Activated CD4-positive, alpha-beta T cell treated with anti-CD3 and anti-CD28 coated beads, Interleukin-2, amount 10 ng/mL, durations not matched to agents 24 days and 14 days (primary cell): ENCODE measurements at regions of chr3 and their contacts with region 1.

Region 1: GRCh38 chr3:46297658-46298463 is 55.6 kb downstream of the CCR3 start:
- DNase-seq: peak; percentile 62
- H3K4me3 Mint-ChIP-seq: peak overlapping the region; percentile 22
- H3K27ac Mint-ChIP-seq: peak overlapping the region; percentile 81
- H3K4me1 Mint-ChIP-seq: peaks cover 83% of the 10 kb centered on the region
- H3K27me3 Mint-ChIP-seq: peaks cover 4% of the 10 kb centered on the region

Region 2: DNA sequence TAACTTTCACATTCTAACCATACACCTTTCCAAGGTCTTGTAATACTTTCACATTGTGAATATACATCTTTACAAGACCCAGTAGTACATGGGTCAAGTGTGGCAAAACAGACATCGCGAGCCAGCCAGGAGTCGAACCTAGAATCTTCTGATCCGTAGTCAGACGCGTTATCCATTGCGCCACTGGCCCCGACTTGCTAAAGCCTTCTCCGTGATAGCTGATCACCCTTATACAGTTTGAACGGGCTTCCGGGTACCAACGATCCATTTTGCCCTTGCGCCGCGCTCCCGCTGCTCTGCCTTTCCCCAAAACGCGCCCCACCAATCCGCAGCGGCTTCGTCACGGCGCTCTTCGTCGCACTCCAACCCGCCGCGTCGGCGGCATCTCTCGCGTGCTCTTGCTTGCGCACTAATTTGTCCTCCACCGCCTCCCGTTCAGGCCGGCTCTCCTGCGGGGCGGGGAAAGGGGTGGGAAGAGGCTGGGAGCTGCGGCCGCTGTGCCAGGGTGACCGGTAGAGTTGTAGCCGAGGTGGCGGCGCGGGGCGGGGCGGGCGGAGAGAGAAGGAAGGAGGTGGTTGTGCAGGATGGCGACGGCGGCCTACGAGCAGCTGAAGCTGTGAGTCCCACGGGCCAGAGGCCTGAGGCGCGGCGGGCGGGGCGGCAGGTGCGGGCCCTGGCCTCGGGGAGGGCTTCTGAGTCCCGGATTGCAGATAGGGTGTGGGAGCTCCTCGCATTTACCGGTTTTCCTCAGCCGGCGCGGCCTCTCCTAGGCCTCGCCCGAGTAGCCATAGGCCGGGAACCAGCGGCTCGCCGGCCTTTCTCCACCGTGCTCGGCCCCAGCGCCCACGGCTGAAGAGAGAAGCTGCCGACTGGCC is 608.7 kb before region 1 on chr3 and contains the start of gene SACM1L:
- intact Hi-C with region 1: loop called (anchors 10 kb)
- DNase-seq: peak; percentile 99
- H3K4me3 Mint-ChIP-seq: peak within 1 kb of the TSS; percentile 87
- H3K27ac Mint-ChIP-seq: peak within 1 kb of the TSS; percentile 94
- H3K4me1 Mint-ChIP-seq: peaks cover 46% of the 10 kb centered on the region
- H3K27me3 Mint-ChIP-seq: peaks cover 4% of the 10 kb centered on the region
- total RNA-seq, gene SACM1L: 88.0 and 91.7 TPM in 2 replicates

Region 3: DNA sequence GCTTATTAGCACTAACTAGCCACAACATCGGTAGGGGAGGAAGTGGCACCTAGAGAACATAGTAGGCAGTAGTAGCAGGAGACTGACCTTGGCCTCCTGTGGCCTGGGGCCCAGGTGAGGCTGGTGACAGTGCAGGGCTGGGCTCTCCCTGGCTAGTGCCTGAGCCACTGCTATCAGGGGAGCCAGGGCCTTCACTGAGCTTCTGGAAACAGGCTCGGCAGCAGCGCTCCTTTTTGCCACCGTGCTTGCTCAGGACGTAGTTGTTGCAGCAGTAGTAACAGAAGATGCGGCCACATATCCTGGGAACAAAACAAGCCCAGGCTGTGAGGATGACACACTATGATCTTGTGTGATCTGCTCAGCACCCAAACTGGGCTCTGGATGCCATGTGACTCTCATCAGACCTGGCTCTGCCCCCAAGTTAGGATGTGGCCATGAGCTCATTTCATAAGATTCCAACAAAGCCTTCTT is 339.5 kb before region 1 on chr3:
- intact Hi-C with region 1: loop called (anchors 5 kb)
- DNase-seq: no peak
- H3K4me3 Mint-ChIP-seq: no peak overlapping the region
- H3K27ac Mint-ChIP-seq: no peak overlapping the region
- H3K4me1 Mint-ChIP-seq: peaks cover 43% of the 10 kb centered on the region
- H3K27me3 Mint-ChIP-seq: no peaks in the 10 kb centered on the region

Region 4: GRCh38 chr3:46098319-46098761 is 199.5 kb before region 1 on chr3:
- intact Hi-C with region 1: loop called (anchors 1 kb)
- DNase-seq: peak; percentile 91
- H3K4me3 Mint-ChIP-seq: peak overlapping the region; percentile 71
- H3K27ac Mint-ChIP-seq: peak overlapping the region; percentile 92
- H3K4me1 Mint-ChIP-seq: peaks cover 59% of the 10 kb centered on the region
- H3K27me3 Mint-ChIP-seq: peaks cover 11% of the 10 kb centered on the region

Region 5: GRCh38 chr3:46193436-46193835 is 104.4 kb before region 1 on chr3:
- intact Hi-C with region 1: no loop called
- DNase-seq: no peak
- H3K4me3 Mint-ChIP-seq: no peak overlapping the region
- H3K27ac Mint-ChIP-seq: no peak overlapping the region
- H3K4me1 Mint-ChIP-seq: no peaks in the 10 kb centered on the region
- H3K27me3 Mint-ChIP-seq: peaks cover 22% of the 10 kb centered on the region

Region 6: GRCh38 chr3:46242120-46242519 is 55.7 kb before region 1 on chr3 and contains the start of gene CCR3:
- intact Hi-C with region 1: no loop called
- DNase-seq: no peak
- H3K4me3 Mint-ChIP-seq: no peak within 1 kb of the TSS
- H3K27ac Mint-ChIP-seq: no peak within 1 kb of the TSS
- H3K4me1 Mint-ChIP-seq: peaks cover 8% of the 10 kb centered on the region
- H3K27me3 Mint-ChIP-seq: peaks cover 53% of the 10 kb centered on the region
- total RNA-seq, gene CCR3: not detected in 2 replicates

Region 7: DNA sequence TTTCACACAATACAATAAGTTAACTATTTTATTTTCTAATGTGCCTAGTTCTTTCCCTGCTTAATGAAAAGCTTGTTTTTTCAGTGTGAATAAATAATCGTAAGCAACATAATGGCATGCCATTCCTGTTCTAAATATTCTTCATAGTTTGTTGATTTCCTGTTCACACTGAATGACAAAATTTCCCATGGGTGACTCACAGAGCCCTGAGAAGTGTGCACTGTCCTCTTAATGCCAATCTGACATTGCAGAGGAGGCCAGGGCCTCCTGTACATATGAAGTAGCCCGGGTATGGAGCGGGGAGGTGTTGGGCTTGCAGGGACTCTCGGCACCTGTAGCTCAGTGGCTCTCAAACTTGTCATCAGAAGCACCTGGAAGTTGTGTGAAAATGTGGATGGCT is 31.3 kb before region 1 on chr3:
- intact Hi-C with region 1: loop called (anchors 1 kb)
- DNase-seq: no peak
- H3K4me3 Mint-ChIP-seq: no peak overlapping the region
- H3K27ac Mint-ChIP-seq: no peak overlapping the region
- H3K4me1 Mint-ChIP-seq: peaks cover 34% of the 10 kb centered on the region
- H3K27me3 Mint-ChIP-seq: peaks cover 36% of the 10 kb centered on the region

Region 8: GRCh38 chr3:46314517-46314916 is 16.7 kb after region 1 on chr3:
- intact Hi-C with region 1: loop called (anchors 2 kb)
- DNase-seq: peak; percentile 59
- H3K4me3 Mint-ChIP-seq: no peak overlapping the region
- H3K27ac Mint-ChIP-seq: no peak overlapping the region
- H3K4me1 Mint-ChIP-seq: peaks cover 3% of the 10 kb centered on the region
- H3K27me3 Mint-ChIP-seq: peaks cover 41% of the 10 kb centered on the region

Region 9: GRCh38 chr3:46372492-46373359 is 74.9 kb after region 1 on chr3:
- intact Hi-C with region 1: loop called (anchors 1 kb)
- DNase-seq: peak; percentile 82
- H3K4me3 Mint-ChIP-seq: peak overlapping the region; percentile 36
- H3K27ac Mint-ChIP-seq: peak overlapping the region; percentile 57
- H3K4me1 Mint-ChIP-seq: peaks cover 67% of the 10 kb centered on the region
- H3K27me3 Mint-ChIP-seq: peaks cover 32% of the 10 kb centered on the region

Region 10: DNA sequence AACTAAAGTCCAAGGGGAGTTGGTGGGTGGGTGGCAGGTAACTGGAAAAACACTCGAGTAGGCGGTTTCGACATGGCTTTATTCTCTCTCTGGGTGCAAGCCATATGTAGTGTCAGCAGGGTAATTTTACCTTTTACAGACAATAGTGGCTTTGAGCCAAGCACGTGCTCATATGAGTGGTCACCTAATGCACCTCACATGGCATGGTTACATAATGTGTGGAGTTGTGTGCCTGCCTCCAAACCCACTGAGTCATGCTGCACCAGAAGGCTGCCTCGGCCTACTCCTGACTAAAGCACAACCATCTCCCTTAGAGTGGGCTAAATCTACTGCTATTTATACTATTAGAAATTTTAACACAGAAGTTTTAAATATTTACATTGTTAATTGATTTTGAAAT is 125.7 kb after region 1 on chr3:
- intact Hi-C with region 1: no loop called
- DNase-seq: no peak
- H3K4me3 Mint-ChIP-seq: no peak overlapping the region
- H3K27ac Mint-ChIP-seq: no peak overlapping the region
- H3K4me1 Mint-ChIP-seq: peaks cover 9% of the 10 kb centered on the region
- H3K27me3 Mint-ChIP-seq: peaks cover 4% of the 10 kb centered on the region

Region 11: GRCh38 chr3:46469680-46470357 is 172.0 kb after region 1 on chr3:
- intact Hi-C with region 1: no loop called
- DNase-seq: no peak
- H3K4me3 Mint-ChIP-seq: no peak overlapping the region
- H3K27ac Mint-ChIP-seq: no peak overlapping the region
- H3K4me1 Mint-ChIP-seq: no peaks in the 10 kb centered on the region
- H3K27me3 Mint-ChIP-seq: peaks cover 42% of the 10 kb centered on the region